CD8-positive, alpha-beta T cell (primary cell): ENCODE measurements at regions of chr16 and their contacts with region 1.

Region 1: DNA sequence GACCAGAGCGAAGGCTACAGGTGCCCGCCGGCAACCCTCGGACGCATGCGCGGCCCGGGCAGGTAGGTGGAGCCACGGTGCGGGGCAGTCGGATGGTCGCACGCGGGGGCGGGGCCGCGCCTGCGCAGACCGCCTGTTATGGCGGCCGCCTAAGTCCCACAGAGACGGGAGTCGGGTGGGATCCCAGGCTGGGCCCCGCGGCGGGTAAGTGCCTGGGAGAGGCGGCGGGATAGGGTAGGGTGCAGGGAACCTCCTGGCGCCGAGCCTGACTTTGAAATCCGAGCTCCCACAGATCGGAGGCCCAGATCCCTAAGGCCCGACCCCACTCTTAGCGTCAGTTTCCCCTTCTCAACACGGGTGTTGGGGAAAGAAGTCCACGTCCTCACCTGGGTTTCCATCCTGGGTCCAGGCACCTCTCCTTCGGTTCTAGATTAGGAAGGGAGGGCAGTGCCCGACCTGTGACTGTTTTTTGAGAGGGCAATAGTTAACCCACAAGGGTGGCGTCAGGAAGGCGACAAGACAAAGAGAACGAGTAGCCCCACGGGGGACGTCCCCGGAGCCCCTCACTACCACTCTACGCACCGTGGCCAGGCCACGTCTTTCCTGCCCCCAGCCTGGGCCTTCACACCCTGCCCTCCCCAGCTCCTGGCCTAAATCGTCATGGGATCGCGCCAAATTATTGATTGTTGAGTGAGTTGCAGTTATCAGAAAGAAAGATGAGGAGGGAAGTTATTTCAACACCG is at the start of gene METTL22:
- DNase-seq: peak; percentile 83 to 96 (median 91)
- ATAC-seq: peak; percentile 98
- H3K4me3 ChIP-seq: peak within 1 kb of the TSS; percentile 90 to 100
- H3K4me3 Mint-ChIP-seq: peak within 1 kb of the TSS; percentile 94
- H3K27ac ChIP-seq: peak within 1 kb of the TSS; percentile 83 to 84
- H3K27ac Mint-ChIP-seq: peak within 1 kb of the TSS; percentile 92
- H3K4me1 ChIP-seq: peaks cover 11% of the 10 kb centered on the region
- H3K4me1 Mint-ChIP-seq: peaks cover 20% of the 10 kb centered on the region
- H3K27me3 ChIP-seq: no peaks in the 10 kb centered on the region
- H3K27me3 Mint-ChIP-seq: no peaks in the 10 kb centered on the region
- CTCF ChIP-seq: no peak
- total RNA-seq, gene METTL22: 30.0 to 30.8 TPM

Region 2: GRCh38 chr16:8330761-8331160 is 291.0 kb before region 1 on chr16:
- CTCF ChIA-PET with region 1: no interaction called
- POLR2A ChIA-PET with region 1: no interaction called
- intact Hi-C with region 1: no loop called
- DNase-seq: no peak
- ATAC-seq: no peak
- H3K4me3 ChIP-seq: no peak overlapping the region
- H3K4me3 Mint-ChIP-seq: no peak overlapping the region
- H3K27ac ChIP-seq: no peak overlapping the region
- H3K27ac Mint-ChIP-seq: no peak overlapping the region
- H3K4me1 ChIP-seq: no peaks in the 10 kb centered on the region
- H3K4me1 Mint-ChIP-seq: no peaks in the 10 kb centered on the region
- H3K27me3 ChIP-seq: no peaks in the 10 kb centered on the region
- H3K27me3 Mint-ChIP-seq: no peaks in the 10 kb centered on the region
- CTCF ChIP-seq: no peak

Region 3: DNA sequence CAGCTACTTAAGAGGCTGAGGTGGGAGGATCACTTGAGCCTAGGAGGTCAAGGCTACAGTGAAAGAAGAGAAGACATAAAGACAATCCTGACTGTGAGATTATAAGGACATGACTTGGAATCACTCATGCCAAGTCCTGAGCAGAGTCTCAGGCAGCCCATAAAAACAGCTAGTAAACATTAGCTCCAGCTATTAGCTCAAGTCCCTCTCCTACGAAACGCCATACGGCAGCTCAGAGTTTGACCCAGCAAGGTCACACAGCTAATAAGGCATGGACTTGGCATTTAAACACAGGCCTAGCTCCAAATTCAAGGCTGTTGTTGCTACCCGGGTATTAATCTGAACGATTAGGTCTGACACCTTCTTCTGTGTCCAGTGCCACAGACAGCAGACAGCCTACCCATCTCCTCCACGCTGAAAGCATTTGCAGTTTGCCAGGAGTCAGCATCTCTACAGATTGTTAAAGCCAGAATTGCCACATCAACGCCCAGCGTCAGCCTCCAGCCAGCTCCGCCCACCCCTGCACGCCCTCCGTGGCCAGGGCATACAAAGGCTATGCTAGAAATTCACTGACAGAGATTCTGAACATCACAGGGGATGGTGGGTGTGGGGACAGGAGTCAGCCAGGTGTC is 21.5 kb before region 1 on chr16:
- CTCF ChIA-PET with region 1: no interaction called
- POLR2A ChIA-PET with region 1: no interaction called
- intact Hi-C with region 1: no loop called
- DNase-seq: no peak
- ATAC-seq: no peak
- H3K4me3 ChIP-seq: no peak overlapping the region
- H3K4me3 Mint-ChIP-seq: no peak overlapping the region
- H3K27ac ChIP-seq: no peak overlapping the region
- H3K27ac Mint-ChIP-seq: no peak overlapping the region
- H3K4me1 ChIP-seq: no peaks in the 10 kb centered on the region
- H3K4me1 Mint-ChIP-seq: no peaks in the 10 kb centered on the region
- H3K27me3 ChIP-seq: no peaks in the 10 kb centered on the region
- H3K27me3 Mint-ChIP-seq: peaks cover 6% of the 10 kb centered on the region
- CTCF ChIP-seq: no peak

Region 4: GRCh38 chr16:8868416-8869211 is 246.9 kb after region 1 on chr16 and contains the start of gene CARHSP1:
- CTCF ChIA-PET with region 1: no interaction called
- POLR2A ChIA-PET with region 1: no interaction called
- intact Hi-C with region 1: loop called (anchors 1 to 2 kb)
- DNase-seq: peak; percentile 55 to 90 (median 75)
- ATAC-seq: peak; percentile 76
- H3K4me3 ChIP-seq: peak within 1 kb of the TSS; percentile 68 to 72
- H3K4me3 Mint-ChIP-seq: peak within 1 kb of the TSS; percentile 97
- H3K27ac ChIP-seq: peak within 1 kb of the TSS; percentile 41 to 52
- H3K27ac Mint-ChIP-seq: peak within 1 kb of the TSS; percentile 93
- H3K4me1 ChIP-seq: peaks cover 53% of the 10 kb centered on the region
- H3K4me1 Mint-ChIP-seq: peaks cover 57% of the 10 kb centered on the region
- H3K27me3 ChIP-seq: no peaks in the 10 kb centered on the region
- H3K27me3 Mint-ChIP-seq: no peaks in the 10 kb centered on the region
- CTCF ChIP-seq: no peak
- total RNA-seq, gene CARHSP1: 28.0 to 33.3 TPM